GM12878 (cell line): ENCODE measurements at regions of chr1 and their contacts with region 1.

Region 1: GRCh38 chr1:44730741-44731512 is at the start of gene RNU5D-1:
- DNase-seq: peak; percentile 98
- ATAC-seq: peak; percentile 87
- H3K4me3 ChIP-seq: peak within 1 kb of the TSS; percentile 47; the same call in 1 of the 2 replicates
- H3K27ac ChIP-seq: peak within 1 kb of the TSS; percentile 100
- H3K4me1 ChIP-seq: peaks cover 14% of the 10 kb centered on the region
- H3K27me3 ChIP-seq: no peaks in the 10 kb centered on the region
- CTCF ChIP-seq: peak; percentile 72 to 88 (median 83)
- EP300 ChIP-seq: peak in 1 of 2 experiments; percentile 44; a peak in 1 of 4 replicates
- POLR2A ChIP-seq: peak; percentile 96
- RAD21 ChIP-seq: peak; percentile 58
- polyA plus RNA-seq, gene RNU5D-1: not detected

Region 2: GRCh38 chr1:44696789-44697345 is 34.1 kb before region 1 on chr1:
- CTCF ChIA-PET with region 1: interaction called, 11 read pairs
- POLR2A ChIA-PET with region 1: no interaction called
- RAD21 ChIA-PET with region 1: interaction called, 3 read pairs
- SMC1A ChIA-PET with region 1: interaction called, 4 read pairs
- in situ Hi-C with region 1: no loop called
- intact Hi-C with region 1: no loop called
- DNase-seq: no peak
- ATAC-seq: peak; percentile 74
- H3K4me3 ChIP-seq: no peak overlapping the region
- H3K27ac ChIP-seq: peak overlapping the region; percentile 45
- H3K4me1 ChIP-seq: peaks cover 51% of the 10 kb centered on the region
- H3K27me3 ChIP-seq: no peaks in the 10 kb centered on the region
- CTCF ChIP-seq: no peak
- EP300 ChIP-seq: no peak
- POLR2A ChIP-seq: 0 out of 2 replicates have a peak, but pooled peaks have one; percentile 24
- RAD21 ChIP-seq: no peak

Region 3: GRCh38 chr1:44747878-44748277 is 17.0 kb after region 1 on chr1:
- CTCF ChIA-PET with region 1: interaction called, 12 read pairs
- POLR2A ChIA-PET with region 1: interaction called, 3 read pairs
- RAD21 ChIA-PET with region 1: interaction called, 4 read pairs
- SMC1A ChIA-PET with region 1: interaction called, 26 read pairs
- in situ Hi-C with region 1: no loop called
- intact Hi-C with region 1: no loop called
- DNase-seq: no peak
- ATAC-seq: no peak
- H3K4me3 ChIP-seq: no peak overlapping the region
- H3K27ac ChIP-seq: no peak overlapping the region
- H3K4me1 ChIP-seq: no peaks in the 10 kb centered on the region
- H3K27me3 ChIP-seq: no peaks in the 10 kb centered on the region
- CTCF ChIP-seq: no peak
- EP300 ChIP-seq: no peak
- POLR2A ChIP-seq: no peak
- RAD21 ChIP-seq: no peak

Region 4: GRCh38 chr1:44786138-44786840 is 55.4 kb after region 1 on chr1:
- CTCF ChIA-PET with region 1: interaction called, 40 read pairs
- POLR2A ChIA-PET with region 1: interaction called, 9 read pairs
- RAD21 ChIA-PET with region 1: interaction called, 11 read pairs
- SMC1A ChIA-PET with region 1: interaction called, 9 read pairs
- in situ Hi-C with region 1: no loop called
- intact Hi-C with region 1: no loop called
- DNase-seq: no peak
- ATAC-seq: peak; percentile 70
- H3K4me3 ChIP-seq: peak overlapping the region; percentile 46; the same call in 1 of the 2 replicates
- H3K27ac ChIP-seq: no peak overlapping the region
- H3K4me1 ChIP-seq: peaks cover 30% of the 10 kb centered on the region
- H3K27me3 ChIP-seq: no peaks in the 10 kb centered on the region
- CTCF ChIP-seq: peak; percentile 85 to 100 (median 99)
- EP300 ChIP-seq: no peak
- POLR2A ChIP-seq: peak; percentile 76
- RAD21 ChIP-seq: peak; percentile 65

Region 5: DNA sequence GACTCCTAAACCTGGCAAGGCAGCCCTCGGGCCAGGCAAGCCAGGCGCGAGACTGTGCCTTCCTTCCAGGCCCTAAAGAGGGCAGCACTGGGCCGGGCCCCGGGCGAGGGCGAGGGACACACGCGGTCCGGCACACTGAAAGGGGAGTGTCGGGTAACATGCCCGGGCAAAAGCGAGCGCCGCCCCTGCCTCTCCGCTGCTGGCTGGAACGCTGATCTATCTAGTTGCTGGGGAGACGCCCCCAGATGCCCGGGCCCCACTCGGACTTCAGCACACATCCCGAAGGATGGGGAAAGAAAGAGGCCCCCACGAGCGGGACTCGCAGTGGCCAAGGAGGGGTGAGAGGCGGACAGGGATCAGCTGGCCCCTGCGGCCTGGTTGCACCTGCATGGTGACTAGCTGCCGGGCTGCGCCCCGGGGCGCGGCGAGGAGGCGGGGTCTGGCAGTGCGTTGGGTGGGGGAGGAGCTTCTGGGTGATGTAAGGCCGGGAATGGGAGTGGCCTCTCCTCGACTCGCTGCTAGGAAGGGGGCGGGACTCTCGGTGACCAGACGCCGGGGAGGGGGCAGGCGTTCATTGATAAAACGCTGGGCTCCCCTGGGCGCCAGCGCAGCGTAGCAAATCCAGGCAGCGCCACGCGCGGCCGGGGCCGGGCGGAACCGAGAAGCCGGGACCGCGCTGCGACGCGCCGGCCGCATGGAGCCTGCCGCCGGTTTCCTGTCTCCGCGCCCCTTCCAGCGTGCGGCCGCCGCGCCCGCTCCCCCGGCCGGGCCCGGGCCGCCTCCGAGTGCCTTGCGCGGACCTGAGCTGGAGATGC is 69.0 kb after region 1 on chr1 and contains the start of gene PLK3:
- CTCF ChIA-PET with region 1: interaction called, 13 read pairs
- POLR2A ChIA-PET with region 1: interaction called, 11 read pairs
- RAD21 ChIA-PET with region 1: interaction called, 3 read pairs
- SMC1A ChIA-PET with region 1: interaction called, 3 read pairs
- in situ Hi-C with region 1: loop called (anchors 5 kb)
- intact Hi-C with region 1: no loop called
- DNase-seq: peak; percentile 91
- ATAC-seq: peak; percentile 91
- H3K4me3 ChIP-seq: peak within 1 kb of the TSS; percentile 94
- H3K27ac ChIP-seq: peak within 1 kb of the TSS; percentile 84
- H3K4me1 ChIP-seq: peaks cover 11% of the 10 kb centered on the region
- H3K27me3 ChIP-seq: no peaks in the 10 kb centered on the region
- CTCF ChIP-seq: peak; percentile 92 to 97 (median 95)
- EP300 ChIP-seq: no peak
- POLR2A ChIP-seq: peak; percentile 90
- RAD21 ChIP-seq: peak; percentile 86
- polyA plus RNA-seq, gene PLK3: 1.5 to 1.9 TPM

Region 6: DNA sequence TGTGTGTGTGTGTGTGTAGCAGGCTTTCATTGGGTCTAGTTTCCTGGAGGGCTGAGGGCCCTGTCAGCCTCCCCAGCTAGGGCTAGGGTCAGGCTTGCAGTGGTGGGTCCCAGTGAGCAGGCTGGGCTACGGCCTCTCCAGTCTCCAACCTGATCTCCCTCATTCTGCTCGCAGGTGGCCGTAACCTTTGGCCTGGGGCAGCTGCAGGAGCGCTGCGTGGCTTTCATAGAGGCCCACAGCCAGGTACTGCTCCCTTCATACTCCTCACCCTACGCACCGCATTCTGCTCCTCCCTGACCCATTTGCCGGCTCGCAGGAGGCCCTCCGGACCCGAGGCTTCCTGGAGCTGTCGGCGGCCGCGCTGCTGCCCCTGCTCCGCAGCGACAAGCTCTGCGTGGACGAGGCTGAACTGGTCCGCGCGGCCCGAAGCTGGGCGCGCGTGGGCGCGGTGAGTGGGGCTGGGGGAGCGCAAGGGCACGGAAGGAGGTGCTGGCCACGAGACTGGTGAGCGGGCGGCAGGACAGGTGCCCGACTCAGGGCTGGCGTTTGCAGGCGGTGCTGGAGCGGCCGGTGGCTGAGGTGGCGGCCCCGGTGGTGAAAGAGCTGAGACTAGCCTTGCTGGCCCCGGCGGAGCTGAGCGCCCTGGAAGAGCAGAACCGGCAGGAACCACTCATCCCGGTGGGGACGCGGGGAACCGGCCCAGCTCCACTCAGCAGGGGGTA is 82.1 kb after region 1 on chr1:
- CTCF ChIA-PET with region 1: interaction called, 16 read pairs
- POLR2A ChIA-PET with region 1: interaction called, 34 read pairs
- RAD21 ChIA-PET with region 1: interaction called, 24 read pairs
- SMC1A ChIA-PET with region 1: interaction called, 13 read pairs
- in situ Hi-C with region 1: loop called (anchors 5 kb)
- intact Hi-C with region 1: no loop called
- DNase-seq: no peak
- ATAC-seq: no peak
- H3K4me3 ChIP-seq: no peak overlapping the region
- H3K27ac ChIP-seq: peak overlapping the region; percentile 71; the same call in 1 of the 2 replicates
- H3K4me1 ChIP-seq: peaks cover 32% of the 10 kb centered on the region
- H3K27me3 ChIP-seq: no peaks in the 10 kb centered on the region
- CTCF ChIP-seq: no peak
- EP300 ChIP-seq: no peak
- POLR2A ChIP-seq: no peak
- RAD21 ChIP-seq: no peak